ENCODE measurements at regions of chr1 and their contacts with region 1.

Region 1: DNA sequence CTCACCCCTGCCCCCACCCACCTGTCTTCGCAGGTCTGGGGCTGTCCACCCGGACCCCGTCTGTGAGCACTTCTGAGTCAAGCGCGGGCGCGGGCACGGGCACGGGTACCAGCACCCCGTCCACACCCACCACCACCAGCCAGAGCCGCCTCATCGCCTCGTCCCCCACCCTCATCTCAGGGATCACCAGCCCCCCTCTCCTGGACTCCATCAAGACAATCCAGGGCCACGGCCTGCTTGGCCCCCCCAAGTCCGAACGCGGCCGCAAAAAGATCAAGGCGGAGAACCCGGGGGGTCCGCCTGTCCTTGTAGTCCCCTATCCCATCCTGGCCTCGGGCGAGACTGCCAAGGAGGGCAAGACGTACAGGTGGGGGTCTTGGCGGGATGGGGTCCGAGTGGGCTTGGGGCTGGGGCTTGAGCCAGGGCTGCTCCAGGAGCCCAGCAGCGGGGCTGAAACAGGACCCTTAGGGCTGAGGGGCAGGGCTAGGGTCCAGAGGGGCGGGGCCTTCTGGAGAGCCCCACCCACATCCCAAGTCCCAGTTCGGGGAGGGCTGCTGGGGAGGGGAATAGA is 23.9 kb downstream of the ZNF362 start:
- DNase-seq: peak in 1 of 2 donors; percentile 82
- H3K4me3 ChIP-seq: no peak overlapping the region
- CTCF ChIP-seq: no peak
- POLR2A ChIP-seq: no peak

Region 2: DNA sequence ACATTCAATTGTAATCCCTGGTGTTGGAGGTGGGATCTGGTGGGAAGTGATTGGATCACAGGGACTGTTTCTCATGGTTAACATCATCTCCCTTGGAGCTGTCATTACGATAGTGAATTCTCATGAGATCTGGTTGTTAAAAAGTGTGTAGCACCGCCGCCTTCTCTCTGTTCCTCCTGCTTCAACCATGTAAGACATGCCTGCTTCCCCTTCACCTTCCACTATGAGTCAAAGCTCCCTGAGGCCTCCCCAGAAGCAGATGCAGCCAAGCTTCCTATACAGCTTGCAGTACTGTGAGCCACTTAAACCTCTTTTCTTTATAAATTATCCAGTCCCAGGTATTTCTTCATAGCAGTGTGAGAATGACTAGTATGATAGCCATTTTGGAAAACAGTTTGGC is 68.2 kb before region 1 on chr1:
- intact Hi-C with region 1: no loop called
- DNase-seq: no peak
- H3K4me3 ChIP-seq: no peak overlapping the region
- CTCF ChIP-seq: no peak
- POLR2A ChIP-seq: no peak

Region 3: GRCh38 chr1:33460947-33461629 is 180.9 kb after region 1 on chr1:
- intact Hi-C with region 1: loop called (anchors 10 kb)
- DNase-seq: no peak
- H3K4me3 ChIP-seq: no peak overlapping the region
- CTCF ChIP-seq: no peak
- POLR2A ChIP-seq: no peak